CD4-positive, alpha-beta T cell (primary cell): ENCODE measurements at regions of chr5 and their contacts with region 1.

Region 1: GRCh38 chr5:32174011-32174870 is at the start of gene GOLPH3:
- DNase-seq: peak; percentile 84 to 94 (median 91)
- ATAC-seq: peak; percentile 84
- H3K4me3 ChIP-seq: peak within 1 kb of the TSS; percentile 90
- H3K4me3 Mint-ChIP-seq: peak within 1 kb of the TSS; percentile 99
- H3K27ac ChIP-seq: peak within 1 kb of the TSS; percentile 89 to 95
- H3K27ac Mint-ChIP-seq: peak within 1 kb of the TSS; percentile 95
- H3K4me1 ChIP-seq: peaks cover 18% of the 10 kb centered on the region
- H3K4me1 Mint-ChIP-seq: peaks cover 39% of the 10 kb centered on the region
- H3K27me3 ChIP-seq: no peaks in the 10 kb centered on the region
- H3K27me3 Mint-ChIP-seq: peaks cover 6% of the 10 kb centered on the region
- CTCF ChIP-seq: no peak
- total RNA-seq, gene GOLPH3: 52.0 to 55.4 TPM

Region 2: GRCh38 chr5:31987985-31988710 is 186.1 kb before region 1 on chr5:
- CTCF ChIA-PET with region 1: no interaction called
- POLR2A ChIA-PET with region 1: no interaction called
- intact Hi-C with region 1: no loop called
- DNase-seq: no peak
- ATAC-seq: no peak
- H3K4me3 ChIP-seq: no peak overlapping the region
- H3K4me3 Mint-ChIP-seq: no peak overlapping the region
- H3K27ac ChIP-seq: no peak overlapping the region
- H3K27ac Mint-ChIP-seq: no peak overlapping the region
- H3K4me1 ChIP-seq: no peaks in the 10 kb centered on the region
- H3K4me1 Mint-ChIP-seq: no peaks in the 10 kb centered on the region
- H3K27me3 ChIP-seq: no peaks in the 10 kb centered on the region
- H3K27me3 Mint-ChIP-seq: no peaks in the 10 kb centered on the region
- CTCF ChIP-seq: no peak

Region 3: DNA sequence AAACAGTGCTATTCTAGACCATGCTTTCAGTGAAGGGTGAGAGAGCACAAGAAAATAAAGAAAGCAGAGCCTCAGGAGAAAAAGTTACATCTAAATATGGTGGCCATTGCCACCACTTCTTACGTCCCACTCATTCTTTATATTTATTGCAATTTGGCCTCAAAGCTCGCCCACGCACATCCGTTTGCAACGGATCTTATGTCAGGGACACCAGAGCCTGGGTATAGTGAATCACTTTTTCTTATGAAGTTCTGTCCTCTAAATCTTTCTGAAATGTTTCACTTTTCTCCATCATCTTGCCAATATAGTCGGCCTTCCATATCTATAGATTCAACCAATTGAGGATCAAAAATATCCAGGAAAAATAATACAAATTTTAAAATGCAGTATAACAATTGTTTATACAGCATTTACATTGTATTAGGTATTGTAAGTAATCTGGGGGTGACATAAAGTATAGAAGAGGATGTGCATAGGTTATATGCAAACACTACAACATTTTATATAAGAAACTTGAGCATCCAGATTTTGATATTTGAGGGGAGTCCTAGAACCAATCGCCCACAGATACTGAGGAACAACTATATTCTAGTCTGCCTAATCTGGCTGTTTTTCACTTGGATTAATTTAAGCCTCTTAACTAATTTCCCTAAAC is 35.3 kb before region 1 on chr5:
- CTCF ChIA-PET with region 1: no interaction called
- POLR2A ChIA-PET with region 1: interaction called, 5 read pairs
- intact Hi-C with region 1: loop called in 1 of 2 experiments (anchors 5 kb)
- DNase-seq: peak in 5 of 14 experiments; percentile 14 to 30 (median 23)
- ATAC-seq: peak; percentile 39
- H3K4me3 ChIP-seq: no peak overlapping the region
- H3K4me3 Mint-ChIP-seq: no peak overlapping the region
- H3K27ac ChIP-seq: no peak overlapping the region
- H3K27ac Mint-ChIP-seq: peak overlapping the region; percentile 31
- H3K4me1 ChIP-seq: peaks cover 5% of the 10 kb centered on the region
- H3K4me1 Mint-ChIP-seq: peaks cover 30% of the 10 kb centered on the region
- H3K27me3 ChIP-seq: no peaks in the 10 kb centered on the region
- H3K27me3 Mint-ChIP-seq: no peaks in the 10 kb centered on the region
- CTCF ChIP-seq: no peak

Region 4: DNA sequence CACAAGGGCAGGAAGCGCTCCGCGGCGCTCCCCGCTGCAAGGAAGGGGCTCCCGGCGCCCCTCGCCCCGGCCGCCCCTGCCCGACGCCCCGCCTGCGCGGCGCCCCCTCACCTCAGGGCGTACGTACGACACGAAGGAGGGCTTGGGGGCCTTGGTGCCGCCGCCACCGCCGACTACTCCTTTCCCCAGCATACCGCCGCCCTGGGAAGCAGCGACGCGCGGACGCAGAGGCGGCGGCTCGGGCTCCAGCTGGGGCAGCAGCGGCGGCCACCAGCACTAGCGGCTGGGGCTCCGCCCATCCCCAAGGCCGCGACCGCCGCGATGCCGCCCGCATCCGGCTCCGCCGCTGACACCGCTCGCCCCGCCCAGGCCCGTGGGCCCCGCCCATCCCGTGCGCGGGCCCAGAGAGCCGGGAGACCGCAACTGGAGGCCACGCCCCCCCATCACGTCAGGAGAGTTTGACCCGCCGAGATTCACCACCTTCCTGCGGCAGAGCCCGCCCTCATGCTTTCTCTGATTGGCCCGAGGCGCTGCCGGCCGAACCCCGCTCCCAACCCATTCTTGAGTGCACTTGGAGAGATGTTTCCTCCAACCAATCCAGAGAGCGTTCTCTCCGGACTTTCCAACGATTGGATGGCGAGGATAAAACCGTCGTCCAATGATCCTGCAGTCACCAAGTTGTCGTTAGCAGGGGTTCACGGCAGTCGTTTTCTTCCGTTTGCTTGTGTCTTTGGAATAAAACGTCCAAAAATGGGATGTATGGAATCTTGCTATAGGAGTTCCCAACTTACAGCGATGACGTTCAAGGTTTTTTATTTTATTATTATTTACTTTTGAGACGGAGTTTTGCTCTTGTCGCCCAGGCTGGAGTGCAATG is 138.6 kb after region 1 on chr5 and contains the start of gene MTMR12:
- CTCF ChIA-PET with region 1: no interaction called
- POLR2A ChIA-PET with region 1: interaction called, 18 read pairs
- intact Hi-C with region 1: loop called (anchors 2 kb)
- DNase-seq: peak; percentile 99 to 100 (median 100)
- ATAC-seq: peak; percentile 92
- H3K4me3 ChIP-seq: peak within 1 kb of the TSS; percentile 87
- H3K4me3 Mint-ChIP-seq: peak within 1 kb of the TSS; percentile 91
- H3K27ac ChIP-seq: peak within 1 kb of the TSS; percentile 65 to 78
- H3K27ac Mint-ChIP-seq: peak within 1 kb of the TSS; percentile 93
- H3K4me1 ChIP-seq: peaks cover 35% of the 10 kb centered on the region
- H3K4me1 Mint-ChIP-seq: peaks cover 43% of the 10 kb centered on the region
- H3K27me3 ChIP-seq: no peaks in the 10 kb centered on the region
- H3K27me3 Mint-ChIP-seq: no peaks in the 10 kb centered on the region
- CTCF ChIP-seq: no peak
- total RNA-seq, gene MTMR12: 15.9 to 18.3 TPM

Region 5: DNA sequence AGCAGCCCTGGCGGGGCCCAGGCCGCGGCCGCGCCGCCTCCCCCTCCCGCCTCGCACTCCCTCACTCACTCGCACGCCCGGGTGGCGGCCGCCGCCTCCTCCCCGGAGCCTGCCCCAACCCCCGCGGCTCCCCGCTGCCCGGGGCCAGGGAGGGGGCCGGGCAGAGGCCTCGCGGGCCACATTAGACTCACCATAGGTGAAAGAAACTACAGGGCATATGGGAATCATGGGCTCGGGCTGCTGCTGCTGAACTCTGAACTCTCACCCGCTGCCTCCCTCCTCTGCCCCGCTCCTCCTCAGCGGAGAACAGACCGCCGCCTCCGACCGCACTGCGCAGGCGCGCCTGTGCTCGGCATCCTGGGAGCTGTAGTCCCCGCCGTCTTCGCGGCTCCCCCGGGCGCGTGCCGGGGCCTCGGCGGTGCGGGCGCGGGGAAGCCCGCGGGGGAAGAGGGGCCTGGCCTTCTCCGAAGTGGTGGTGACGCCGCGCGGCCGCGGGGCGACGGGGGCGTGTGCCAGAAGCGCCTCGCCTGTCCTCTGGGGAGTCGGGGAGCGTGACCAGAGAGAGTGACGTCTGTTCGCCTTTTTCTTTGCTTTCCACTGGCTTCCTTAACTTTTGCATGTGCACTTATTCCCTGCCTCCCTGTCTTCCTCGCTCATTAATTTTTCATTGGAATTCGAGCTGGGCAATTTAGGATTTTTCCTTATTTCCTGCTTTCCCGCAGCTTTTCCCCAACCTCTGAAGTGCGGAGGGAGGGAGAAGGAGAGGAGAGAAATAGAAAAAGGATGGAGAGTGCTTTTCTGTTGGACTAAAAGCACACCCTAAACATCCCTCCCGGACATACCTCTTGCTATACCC is 270.4 kb after region 1 on chr5 and contains the start of gene ZFR:
- CTCF ChIA-PET with region 1: no interaction called
- POLR2A ChIA-PET with region 1: interaction called, 9 read pairs
- intact Hi-C with region 1: loop called (anchors 2 to 5 kb)
- DNase-seq: peak; percentile 84 to 98 (median 92)
- ATAC-seq: peak; percentile 92
- H3K4me3 ChIP-seq: peak within 1 kb of the TSS; percentile 89
- H3K4me3 Mint-ChIP-seq: peak within 1 kb of the TSS; percentile 93
- H3K27ac ChIP-seq: peak within 1 kb of the TSS; percentile 88 to 91
- H3K27ac Mint-ChIP-seq: peak within 1 kb of the TSS; percentile 89
- H3K4me1 ChIP-seq: peaks cover 26% of the 10 kb centered on the region
- H3K4me1 Mint-ChIP-seq: peaks cover 32% of the 10 kb centered on the region
- H3K27me3 ChIP-seq: no peaks in the 10 kb centered on the region
- H3K27me3 Mint-ChIP-seq: no peaks in the 10 kb centered on the region
- CTCF ChIP-seq: no peak
- total RNA-seq, gene ZFR: 58.8 to 61.0 TPM